Tibial artery (tissue), 4 donors: ENCODE measurements at regions of chr10 and their contacts with region 1.

Region 1: DNA sequence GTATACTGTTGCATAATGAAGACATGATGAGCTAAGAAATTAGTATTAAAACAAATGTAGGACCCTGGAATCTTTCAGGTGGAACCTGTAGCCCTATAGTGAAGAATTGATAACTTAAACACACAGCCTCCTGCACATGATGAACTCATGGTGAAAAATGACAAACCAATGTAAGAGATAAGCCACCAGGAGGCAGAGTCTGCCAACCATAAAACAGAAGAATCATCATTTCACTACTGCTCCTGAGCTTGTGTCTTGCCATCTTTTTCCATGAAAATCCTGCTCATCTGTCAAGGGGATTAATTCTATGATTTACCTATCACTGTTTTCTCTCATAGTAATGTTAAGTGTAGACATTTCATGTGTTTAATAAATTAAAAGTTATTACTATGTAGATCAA is 363.9 kb downstream of the MALRD1 start:
- DNase-seq: no peak
- H3K4me3 ChIP-seq: no peak overlapping the region
- H3K27ac ChIP-seq: no peak overlapping the region
- H3K4me1 ChIP-seq: no peaks in the 10 kb centered on the region
- H3K27me3 ChIP-seq: no peaks in the 10 kb centered on the region
- CTCF ChIP-seq: peak; percentile 56 to 79

Region 2: GRCh38 chr10:19332304-19332703 is 80.2 kb before region 1 on chr10:
- intact Hi-C with region 1: no loop called
- DNase-seq: no peak
- H3K4me3 ChIP-seq: no peak overlapping the region
- H3K27ac ChIP-seq: no peak overlapping the region
- H3K4me1 ChIP-seq: no peaks in the 10 kb centered on the region
- H3K27me3 ChIP-seq: no peaks in the 10 kb centered on the region
- CTCF ChIP-seq: no peak

Region 3: GRCh38 chr10:19788075-19788686 is 375.6 kb after region 1 on chr10:
- intact Hi-C with region 1: loop called (anchors 5 kb)
- DNase-seq: peak in 1 of 2 donors; percentile 47
- H3K4me3 ChIP-seq: no peak overlapping the region
- H3K27ac ChIP-seq: no peak overlapping the region
- H3K4me1 ChIP-seq: no peaks in the 10 kb centered on the region
- H3K27me3 ChIP-seq: no peaks in the 10 kb centered on the region
- CTCF ChIP-seq: peak; percentile 77 to 86

Region 4: DNA sequence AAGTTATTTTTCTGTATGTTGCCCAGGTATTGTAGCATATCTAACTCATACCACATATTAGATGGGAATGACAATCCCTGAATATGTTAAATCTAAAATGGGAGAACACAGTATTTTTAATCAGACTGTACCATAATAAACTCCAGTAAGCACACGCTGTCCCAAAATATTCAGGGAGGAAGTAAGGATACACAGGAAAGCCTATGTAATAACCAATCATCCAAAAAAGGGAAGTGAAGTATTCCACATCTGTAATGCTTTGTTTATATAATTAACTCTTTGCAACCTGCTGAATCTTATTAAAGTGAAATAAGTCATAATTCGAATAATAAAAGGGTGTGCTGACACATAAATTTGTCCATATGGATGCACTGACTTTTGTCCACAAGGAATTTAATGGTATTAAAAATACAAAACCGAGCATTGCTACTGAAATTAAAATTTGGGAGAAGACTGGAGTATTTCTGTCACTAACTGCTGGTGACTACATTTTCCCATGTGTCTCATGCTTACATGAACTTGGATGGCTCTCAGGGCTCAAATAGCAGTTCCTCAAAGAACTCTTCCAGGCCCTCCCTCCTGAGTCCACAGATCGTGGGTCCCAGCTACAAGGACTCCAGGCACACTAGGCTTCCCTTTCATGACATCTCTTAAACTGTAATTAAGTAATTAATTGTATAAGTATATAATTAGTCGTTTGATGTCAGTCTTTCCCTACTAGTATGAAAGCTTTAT is 1364.0 kb after region 1 on chr10:
- intact Hi-C with region 1: loop called (anchors 10 kb)
- DNase-seq: no peak
- H3K4me3 ChIP-seq: no peak overlapping the region
- H3K27ac ChIP-seq: no peak overlapping the region
- H3K4me1 ChIP-seq: no peaks in the 10 kb centered on the region
- H3K27me3 ChIP-seq: no peaks in the 10 kb centered on the region
- CTCF ChIP-seq: no peak